PC-3 (cell line): ENCODE measurements at regions of chr7 and their contacts with region 1.

Region 1: GRCh38 chr7:74272305-74273038 is 16.7 kb upstream of the CLIP2 start:
- DNase-seq: peak; percentile 77
- ATAC-seq: peak; percentile 73
- H3K4me3 ChIP-seq: no peak overlapping the region
- H3K27ac ChIP-seq: peak overlapping the region; percentile 95
- H3K4me1 ChIP-seq: peaks cover 17% of the 10 kb centered on the region
- H3K27me3 ChIP-seq: no peaks in the 10 kb centered on the region
- CTCF ChIP-seq: no peak

Region 2: DNA sequence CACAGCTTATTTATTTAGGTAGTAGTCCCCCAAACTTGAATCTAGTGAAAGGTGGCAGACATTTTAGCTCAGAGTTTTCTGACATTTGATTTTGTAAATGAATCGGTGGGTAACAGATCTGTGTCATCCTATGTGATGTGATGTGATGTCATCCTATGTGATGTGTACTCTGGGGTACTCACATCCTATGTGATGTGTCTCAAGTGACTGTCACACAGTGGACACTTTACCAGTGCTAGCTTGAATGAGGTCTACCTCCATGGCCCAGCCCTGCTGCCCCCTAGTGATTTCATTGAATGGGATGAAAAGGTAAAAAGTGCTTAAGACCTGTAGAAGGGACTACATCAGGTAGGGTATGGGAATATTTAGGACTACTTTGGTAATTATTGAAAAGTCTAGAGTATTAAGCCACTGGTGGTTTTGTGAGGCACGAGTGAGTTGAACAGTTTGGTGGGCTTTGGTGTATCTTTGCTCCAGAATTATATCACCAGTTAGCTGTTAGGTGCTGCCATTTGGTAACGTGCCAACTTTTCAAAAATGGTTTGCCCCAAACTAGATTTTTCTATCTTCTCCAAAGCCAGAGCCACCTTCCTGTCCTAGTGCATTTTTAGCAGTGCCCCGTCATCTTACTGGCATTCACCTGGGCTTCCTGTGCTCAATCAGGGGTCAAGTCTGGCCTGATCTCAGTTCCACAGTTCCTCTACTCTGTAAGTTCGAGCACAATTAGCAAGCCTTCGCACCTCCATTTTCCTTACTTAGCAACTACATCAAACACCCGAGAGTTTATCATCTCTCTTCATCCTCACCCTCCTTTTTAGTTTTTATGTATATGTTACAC is 88.6 kb before region 1 on chr7:
- CTCF ChIA-PET with region 1: no interaction called
- POLR2A ChIA-PET with region 1: no interaction called
- intact Hi-C with region 1: no loop called
- DNase-seq: peak; percentile 62
- ATAC-seq: peak; percentile 45
- H3K4me3 ChIP-seq: no peak overlapping the region
- H3K27ac ChIP-seq: no peak overlapping the region
- H3K4me1 ChIP-seq: peaks cover 21% of the 10 kb centered on the region
- H3K27me3 ChIP-seq: no peaks in the 10 kb centered on the region
- CTCF ChIP-seq: peak; percentile 71

Region 3: GRCh38 chr7:74289018-74289658 is 16.7 kb after region 1 on chr7 and contains the start of gene CLIP2:
- CTCF ChIA-PET with region 1: interaction called, 4 read pairs
- POLR2A ChIA-PET with region 1: interaction called, 3 read pairs
- intact Hi-C with region 1: loop called (anchors 1 kb)
- DNase-seq: peak; percentile 72
- ATAC-seq: peak; percentile 79
- H3K4me3 ChIP-seq: peak within 1 kb of the TSS; percentile 98
- H3K27ac ChIP-seq: peak within 1 kb of the TSS; percentile 34
- H3K4me1 ChIP-seq: peaks cover 19% of the 10 kb centered on the region
- H3K27me3 ChIP-seq: no peaks in the 10 kb centered on the region
- CTCF ChIP-seq: no peak
- total RNA-seq, gene CLIP2: 26.2 and 33.8 TPM in 2 replicates

Region 4: DNA sequence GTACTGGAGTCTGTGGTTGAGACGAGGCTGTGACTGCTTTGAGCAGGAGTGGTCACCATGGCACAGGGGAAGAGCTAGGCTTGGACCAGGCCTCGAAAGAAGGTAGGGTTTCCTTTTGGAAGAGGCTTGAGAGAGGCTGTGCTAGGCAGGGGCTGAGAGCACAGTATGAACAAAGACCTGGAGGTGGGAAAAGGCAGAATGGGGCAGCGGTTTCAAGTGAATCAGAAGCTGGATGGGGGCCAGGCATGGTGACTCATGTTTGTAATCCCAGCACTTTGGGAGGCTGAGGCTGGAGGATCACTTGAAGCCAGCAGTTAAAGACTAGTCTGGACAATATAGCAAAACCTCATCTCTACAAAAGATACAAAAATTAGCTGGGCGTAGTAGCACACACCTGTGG is 82.6 kb after region 1 on chr7:
- CTCF ChIA-PET with region 1: no interaction called
- POLR2A ChIA-PET with region 1: no interaction called
- intact Hi-C with region 1: loop called (anchors 10 kb)
- DNase-seq: peak; percentile 88
- ATAC-seq: peak; percentile 96
- H3K4me3 ChIP-seq: no peak overlapping the region
- H3K27ac ChIP-seq: peak overlapping the region; percentile 70
- H3K4me1 ChIP-seq: peaks cover 5% of the 10 kb centered on the region
- H3K27me3 ChIP-seq: no peaks in the 10 kb centered on the region
- CTCF ChIP-seq: no peak